ENCODE measurements at regions of chr9 and their contacts with region 1.

Region 1: GRCh38 chr9:127396808-127397497 is at the start of gene SLC2A8:
- DNase-seq: peak; percentile 93
- ATAC-seq: peak; percentile 96
- H3K4me3 Mint-ChIP-seq: peak within 1 kb of the TSS; percentile 51
- H3K27ac Mint-ChIP-seq: no peak within 1 kb of the TSS
- H3K4me1 Mint-ChIP-seq: peaks cover 6% of the 10 kb centered on the region
- H3K27me3 Mint-ChIP-seq: peaks cover 62% of the 10 kb centered on the region
- CTCF ChIP-seq: no peak
- total RNA-seq, gene SLC2A8: 1.6 to 2.1 TPM

Region 2: DNA sequence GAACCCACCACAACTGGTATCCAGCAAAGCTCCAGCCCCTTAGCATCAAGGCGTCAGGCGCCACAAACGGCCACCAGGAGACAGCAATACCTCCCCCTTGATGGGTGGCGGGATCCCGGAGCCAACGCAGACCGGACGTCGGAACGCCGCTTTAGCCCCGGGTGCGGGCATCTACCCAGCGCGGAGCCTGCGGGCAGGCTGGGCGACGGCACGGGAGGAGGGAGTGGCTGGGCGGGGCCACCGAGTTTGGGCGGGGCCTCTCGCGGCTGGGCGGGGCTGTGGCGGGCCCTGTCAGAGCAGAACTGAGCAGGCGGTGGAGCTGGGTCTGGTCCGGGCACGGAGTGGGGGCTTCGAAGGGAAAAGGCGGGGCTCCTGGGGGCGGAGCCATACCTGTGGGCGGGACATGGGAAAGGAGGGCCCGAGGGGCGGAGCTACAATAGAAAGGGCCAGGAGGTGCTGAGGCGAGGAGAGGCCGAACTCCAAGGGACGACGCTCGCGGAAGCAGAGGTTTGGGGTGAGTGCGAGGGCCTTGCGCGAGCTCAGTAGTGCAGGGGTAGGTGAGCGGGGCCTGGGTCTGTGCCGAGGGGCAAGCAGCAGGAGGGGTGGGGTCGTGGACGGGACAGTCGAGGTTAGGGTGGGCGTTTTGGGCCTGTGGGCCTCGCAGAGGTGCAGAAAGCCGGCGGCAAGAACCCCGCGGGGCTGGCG is 172.6 kb before region 1 on chr9:
- CTCF ChIA-PET with region 1: no interaction called
- POLR2A ChIA-PET with region 1: no interaction called
- intact Hi-C with region 1: loop called (anchors 10 kb)
- DNase-seq: peak; percentile 90
- ATAC-seq: peak; percentile 79
- H3K4me3 Mint-ChIP-seq: peak overlapping the region; percentile 74
- H3K27ac Mint-ChIP-seq: peak overlapping the region; percentile 78
- H3K4me1 Mint-ChIP-seq: peaks cover 31% of the 10 kb centered on the region
- H3K27me3 Mint-ChIP-seq: peaks cover 15% of the 10 kb centered on the region
- CTCF ChIP-seq: peak; percentile 29

Region 3: DNA sequence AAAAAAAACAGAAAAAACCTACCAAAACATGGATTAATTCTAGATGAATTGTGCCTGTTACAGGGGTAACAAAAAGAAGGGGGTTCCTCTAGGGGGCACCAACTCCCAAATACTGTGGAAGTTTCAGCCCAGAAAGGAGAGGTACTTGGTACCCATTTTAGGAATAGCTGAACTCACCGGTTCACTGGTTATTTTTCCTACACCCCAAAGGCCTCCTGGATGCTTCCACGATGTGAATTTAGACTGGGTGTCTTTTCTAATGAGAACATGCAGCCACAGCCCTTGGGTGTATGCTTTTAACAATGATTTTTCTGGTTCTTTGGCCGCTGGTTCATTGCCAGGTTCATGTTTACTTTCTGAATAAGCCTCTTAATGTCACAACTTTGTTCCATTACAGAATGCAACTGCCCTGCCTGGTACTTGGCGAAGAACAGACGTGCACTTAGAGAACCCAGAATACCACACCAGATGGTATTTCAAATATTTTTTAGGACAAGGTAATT is 85.7 kb before region 1 on chr9:
- CTCF ChIA-PET with region 1: interaction called, 10 read pairs
- POLR2A ChIA-PET with region 1: no interaction called
- intact Hi-C with region 1: no loop called
- DNase-seq: peak; percentile 59
- ATAC-seq: peak; percentile 62
- H3K4me3 Mint-ChIP-seq: no peak overlapping the region
- H3K27ac Mint-ChIP-seq: no peak overlapping the region
- H3K4me1 Mint-ChIP-seq: no peaks in the 10 kb centered on the region
- H3K27me3 Mint-ChIP-seq: peaks cover 24% of the 10 kb centered on the region
- CTCF ChIP-seq: peak; percentile 61

Region 4: GRCh38 chr9:127406799-127407509 is 10.0 kb after region 1 on chr9:
- CTCF ChIA-PET with region 1: interaction called, 10 read pairs
- POLR2A ChIA-PET with region 1: interaction called, 3 read pairs
- intact Hi-C with region 1: no loop called
- DNase-seq: no peak
- ATAC-seq: no peak
- H3K4me3 Mint-ChIP-seq: no peak overlapping the region
- H3K27ac Mint-ChIP-seq: no peak overlapping the region
- H3K4me1 Mint-ChIP-seq: no peaks in the 10 kb centered on the region
- H3K27me3 Mint-ChIP-seq: peaks cover 27% of the 10 kb centered on the region
- CTCF ChIP-seq: no peak

Region 5: DNA sequence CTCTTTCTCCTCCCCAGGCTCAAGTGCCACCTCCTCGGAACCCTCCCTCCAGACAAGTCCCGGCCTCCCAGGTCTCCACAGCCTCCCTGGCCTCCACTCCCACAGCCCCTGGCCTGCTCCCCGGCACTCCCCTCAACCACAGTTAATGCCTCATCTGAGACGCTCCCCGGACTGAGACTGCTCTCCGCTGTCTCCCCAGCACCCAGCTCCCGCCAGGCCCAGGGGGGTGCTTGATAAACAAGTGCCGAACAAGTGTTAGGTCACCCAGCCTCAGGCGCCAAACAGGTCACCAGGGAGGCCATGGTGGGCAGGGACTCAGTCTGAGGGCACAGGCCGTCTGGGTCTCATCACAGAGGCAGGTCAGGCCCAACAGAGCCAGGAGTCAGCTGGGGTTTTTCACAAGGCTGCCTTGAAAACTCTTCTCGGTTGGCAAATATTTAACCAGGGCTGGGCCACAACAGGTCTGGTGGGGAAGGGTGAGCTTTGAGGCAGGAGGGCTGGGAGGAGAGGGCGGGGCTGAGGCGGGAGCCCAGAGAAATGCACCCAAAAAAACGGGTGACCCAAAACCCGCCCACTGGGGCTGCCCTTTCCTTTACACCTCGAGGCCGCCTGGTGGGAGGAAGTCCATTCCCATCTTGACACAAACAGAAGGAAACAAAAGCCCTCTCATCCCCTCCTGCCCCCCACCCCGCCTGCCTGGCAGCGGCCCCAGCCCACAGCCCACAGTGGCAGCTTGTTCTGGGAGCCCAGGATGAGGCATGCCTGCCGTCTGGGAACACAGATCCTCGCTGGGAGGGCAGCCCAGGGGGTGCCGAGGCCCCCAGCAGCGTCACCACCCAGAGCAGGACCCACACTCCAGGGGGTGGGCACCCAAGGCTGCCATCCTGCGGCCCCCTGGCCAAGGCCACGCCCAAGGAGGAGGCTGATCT is 148.5 kb after region 1 on chr9:
- CTCF ChIA-PET with region 1: no interaction called
- POLR2A ChIA-PET with region 1: no interaction called
- intact Hi-C with region 1: no loop called
- DNase-seq: no peak
- ATAC-seq: no peak
- H3K4me3 Mint-ChIP-seq: no peak overlapping the region
- H3K27ac Mint-ChIP-seq: no peak overlapping the region
- H3K4me1 Mint-ChIP-seq: no peaks in the 10 kb centered on the region
- H3K27me3 Mint-ChIP-seq: no peaks in the 10 kb centered on the region
- CTCF ChIP-seq: no peak